Endothelial cell of umbilical vein (primary cell): ENCODE measurements at regions of chr16 and their contacts with region 1.

Region 1: GRCh38 chr16:86563489-86564345 is 2.9 kb upstream of the FOXC2 start:
- DNase-seq: peak; percentile 92
- H3K4me3 ChIP-seq: peak overlapping the region; percentile 28 to 99 (median 39)
- H3K27ac ChIP-seq: peak overlapping the region; percentile 78
- H3K4me1 ChIP-seq: peaks cover 18% of the 10 kb centered on the region
- H3K27me3 ChIP-seq: no peaks in the 10 kb centered on the region
- CTCF ChIP-seq: peak; percentile 99 to 100
- POLR2A ChIP-seq: no peak

Region 2: DNA sequence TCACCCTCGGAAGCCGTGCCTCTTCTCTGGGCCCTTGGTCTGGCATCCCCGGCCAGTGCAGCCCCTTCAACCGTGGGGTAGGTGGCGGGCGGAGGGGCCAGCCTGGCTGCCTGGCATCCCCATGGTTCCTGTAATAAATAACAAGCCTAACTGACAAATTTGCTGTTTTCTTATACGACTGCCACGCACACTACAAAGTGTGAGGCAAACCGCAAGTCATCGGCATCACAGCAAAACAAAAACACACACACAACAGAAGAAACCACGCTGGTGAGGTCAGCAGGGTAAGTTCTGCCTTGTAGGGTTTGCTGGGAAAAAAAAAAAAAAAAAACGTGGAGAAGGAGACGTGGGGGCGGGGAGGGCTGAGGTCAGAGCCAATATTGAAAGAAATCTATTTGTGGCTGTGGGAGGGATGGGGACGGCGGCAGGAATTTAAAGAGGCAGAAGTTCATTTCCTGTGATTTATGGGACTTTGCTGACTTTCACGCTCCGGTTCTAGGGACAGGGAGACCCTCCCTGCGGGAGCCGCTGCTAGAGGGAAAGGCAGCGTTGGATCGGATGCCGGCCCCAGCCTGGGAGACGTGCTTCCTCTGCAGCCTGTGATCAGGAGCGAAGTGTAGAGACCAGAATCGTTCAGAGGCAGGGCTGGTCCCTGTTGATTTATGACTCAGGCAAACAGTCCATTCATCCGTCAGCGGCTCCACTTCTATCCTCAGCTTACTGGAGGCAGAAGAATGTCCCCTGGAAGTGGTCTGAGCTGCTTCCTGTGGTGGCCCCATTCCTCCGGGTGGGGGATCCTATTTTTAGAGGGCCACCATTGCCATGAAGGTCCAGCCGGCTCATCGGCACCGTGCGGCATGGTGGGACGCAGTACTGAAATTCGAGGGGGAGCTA is 177.4 kb after region 1 on chr16:
- CTCF ChIA-PET with region 1: no interaction called
- POLR2A ChIA-PET with region 1: no interaction called
- dilution Hi-C with region 1: no loop called
- intact Hi-C with region 1: loop called (anchors 1 kb)
- DNase-seq: peak; percentile 92
- H3K4me3 ChIP-seq: peak overlapping the region in 2 of 3 experiments; percentile 15 to 31
- H3K27ac ChIP-seq: peak overlapping the region; percentile 96
- H3K4me1 ChIP-seq: peaks cover 19% of the 10 kb centered on the region
- H3K27me3 ChIP-seq: no peaks in the 10 kb centered on the region
- CTCF ChIP-seq: no peak
- POLR2A ChIP-seq: peak; percentile 75

Region 3: DNA sequence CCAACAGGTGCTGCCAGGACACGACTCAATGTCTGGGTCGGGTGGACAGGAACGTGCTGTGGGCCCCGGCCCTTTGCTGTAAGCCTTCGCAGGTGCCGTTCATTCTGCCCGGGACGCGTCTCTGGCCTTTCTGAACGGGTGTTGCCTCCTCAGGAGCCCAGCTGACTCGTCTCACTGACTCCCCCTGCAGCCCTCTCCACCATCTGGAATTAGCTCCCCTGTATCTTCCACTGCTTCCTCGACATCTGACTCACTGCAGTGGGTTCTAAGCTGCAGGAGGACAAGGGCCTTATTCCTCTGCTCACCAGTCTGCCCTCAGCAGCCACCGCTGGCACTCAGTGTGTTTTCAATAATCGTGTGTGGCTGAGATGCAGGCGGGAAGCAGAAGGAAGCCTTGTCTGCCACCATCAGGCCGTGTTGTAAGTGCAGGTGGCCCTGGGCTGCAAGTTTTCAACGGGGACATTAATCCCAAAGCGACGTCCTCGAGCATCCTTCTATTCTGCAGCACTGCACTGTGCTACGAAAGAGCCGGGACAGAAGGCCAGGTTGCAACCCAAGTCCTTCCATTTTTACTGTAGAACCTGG is 270.8 kb after region 1 on chr16:
- CTCF ChIA-PET with region 1: interaction called, 11 read pairs
- POLR2A ChIA-PET with region 1: no interaction called
- dilution Hi-C with region 1: no loop called
- intact Hi-C with region 1: loop called (anchors 2 kb)
- DNase-seq: peak; percentile 41
- H3K4me3 ChIP-seq: no peak overlapping the region
- H3K27ac ChIP-seq: no peak overlapping the region
- H3K4me1 ChIP-seq: peaks cover 7% of the 10 kb centered on the region
- H3K27me3 ChIP-seq: no peaks in the 10 kb centered on the region
- CTCF ChIP-seq: peak in 1 of 2 donors; percentile 29
- POLR2A ChIP-seq: no peak

Region 4: GRCh38 chr16:87076950-87077749 is 513.4 kb after region 1 on chr16:
- CTCF ChIA-PET with region 1: interaction called, 35 read pairs
- POLR2A ChIA-PET with region 1: no interaction called
- dilution Hi-C with region 1: no loop called
- intact Hi-C with region 1: loop called (anchors 1 kb)
- DNase-seq: peak; percentile 87
- H3K4me3 ChIP-seq: no peak overlapping the region
- H3K27ac ChIP-seq: peak overlapping the region; percentile 52
- H3K4me1 ChIP-seq: peaks cover 11% of the 10 kb centered on the region
- H3K27me3 ChIP-seq: no peaks in the 10 kb centered on the region
- CTCF ChIP-seq: peak; percentile 88 to 91
- POLR2A ChIP-seq: no peak

Region 5: DNA sequence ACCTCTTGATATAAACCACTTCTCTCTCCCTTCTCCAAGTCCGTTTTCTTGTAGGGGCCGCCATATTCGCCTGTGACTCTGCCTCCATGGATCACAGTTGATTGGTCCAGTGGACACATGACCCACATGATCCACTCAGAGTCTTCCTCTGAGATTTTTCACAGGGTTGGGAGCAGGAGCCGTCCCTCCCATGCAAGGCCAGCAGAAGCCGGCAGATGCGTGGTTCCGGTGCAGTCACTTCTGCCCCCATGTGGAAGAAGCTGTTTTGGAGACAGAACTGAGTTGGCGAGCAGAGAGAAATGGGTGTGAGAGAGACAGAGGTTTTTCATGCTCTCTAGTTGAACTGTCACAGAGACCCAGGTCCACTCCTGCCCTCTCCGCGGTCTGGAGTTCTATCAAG is 670.2 kb after region 1 on chr16:
- CTCF ChIA-PET with region 1: interaction called, 14 read pairs
- POLR2A ChIA-PET with region 1: no interaction called
- dilution Hi-C with region 1: no loop called
- intact Hi-C with region 1: no loop called
- DNase-seq: peak; percentile 26
- H3K4me3 ChIP-seq: no peak overlapping the region
- H3K27ac ChIP-seq: no peak overlapping the region
- H3K4me1 ChIP-seq: no peaks in the 10 kb centered on the region
- H3K27me3 ChIP-seq: peaks cover 4 to 6% of the 10 kb centered on the region in 2 experiments
- CTCF ChIP-seq: peak in 1 of 2 donors; percentile 32
- POLR2A ChIP-seq: no peak

Region 6: DNA sequence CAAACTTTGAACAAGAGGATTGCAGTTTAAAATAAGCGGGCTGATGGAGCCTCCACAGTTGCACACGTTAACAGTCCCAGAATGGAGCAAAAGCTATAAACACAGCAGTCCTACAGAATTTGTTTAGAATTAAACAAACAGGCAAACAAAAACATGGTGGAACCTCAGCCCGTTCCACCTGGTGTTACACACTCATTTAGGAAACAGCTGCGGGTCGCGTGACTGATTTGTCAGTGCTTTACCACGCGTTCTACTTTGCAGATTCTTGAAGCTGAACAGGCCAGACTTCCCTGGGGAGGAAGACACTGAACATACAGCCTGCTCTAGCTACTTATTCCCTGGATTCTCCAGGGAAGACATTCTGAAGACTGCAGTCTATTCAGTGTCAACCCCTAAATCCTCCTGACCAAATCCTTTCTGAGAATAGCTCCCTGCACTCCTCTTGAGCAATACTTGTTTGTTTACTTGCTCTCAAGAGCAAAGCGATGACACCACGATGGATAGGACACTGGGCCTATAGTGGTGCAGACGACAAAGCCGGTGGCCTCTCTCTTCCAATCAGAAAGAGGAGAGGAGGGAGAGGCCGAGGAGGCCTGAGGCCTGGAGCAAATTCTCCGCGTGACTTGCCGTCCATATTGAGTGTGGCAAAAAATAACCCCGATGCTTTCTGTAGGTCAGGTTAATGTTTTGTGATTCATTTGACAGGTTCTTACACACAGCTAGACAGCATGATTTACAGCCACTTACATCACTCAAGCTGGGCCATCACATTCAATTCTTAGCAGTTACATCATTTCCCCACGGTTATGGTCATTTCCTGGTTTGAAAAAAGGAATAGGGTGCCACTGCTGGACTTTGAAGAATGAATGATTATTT is 824.5 kb after region 1 on chr16:
- CTCF ChIA-PET with region 1: interaction called, 6 read pairs
- POLR2A ChIA-PET with region 1: no interaction called
- dilution Hi-C with region 1: no loop called
- intact Hi-C with region 1: loop called (anchors 5 kb)
- DNase-seq: peak; percentile 99
- H3K4me3 ChIP-seq: no peak overlapping the region
- H3K27ac ChIP-seq: peak overlapping the region; percentile 84
- H3K4me1 ChIP-seq: peaks cover 21% of the 10 kb centered on the region
- H3K27me3 ChIP-seq: no peaks in the 10 kb centered on the region
- CTCF ChIP-seq: no peak
- POLR2A ChIP-seq: peak; percentile 8